Right ventricle myocardium superior (tissue), 1 donor: ENCODE measurements at regions of chr17 and their contacts with region 1.

Region 1: DNA sequence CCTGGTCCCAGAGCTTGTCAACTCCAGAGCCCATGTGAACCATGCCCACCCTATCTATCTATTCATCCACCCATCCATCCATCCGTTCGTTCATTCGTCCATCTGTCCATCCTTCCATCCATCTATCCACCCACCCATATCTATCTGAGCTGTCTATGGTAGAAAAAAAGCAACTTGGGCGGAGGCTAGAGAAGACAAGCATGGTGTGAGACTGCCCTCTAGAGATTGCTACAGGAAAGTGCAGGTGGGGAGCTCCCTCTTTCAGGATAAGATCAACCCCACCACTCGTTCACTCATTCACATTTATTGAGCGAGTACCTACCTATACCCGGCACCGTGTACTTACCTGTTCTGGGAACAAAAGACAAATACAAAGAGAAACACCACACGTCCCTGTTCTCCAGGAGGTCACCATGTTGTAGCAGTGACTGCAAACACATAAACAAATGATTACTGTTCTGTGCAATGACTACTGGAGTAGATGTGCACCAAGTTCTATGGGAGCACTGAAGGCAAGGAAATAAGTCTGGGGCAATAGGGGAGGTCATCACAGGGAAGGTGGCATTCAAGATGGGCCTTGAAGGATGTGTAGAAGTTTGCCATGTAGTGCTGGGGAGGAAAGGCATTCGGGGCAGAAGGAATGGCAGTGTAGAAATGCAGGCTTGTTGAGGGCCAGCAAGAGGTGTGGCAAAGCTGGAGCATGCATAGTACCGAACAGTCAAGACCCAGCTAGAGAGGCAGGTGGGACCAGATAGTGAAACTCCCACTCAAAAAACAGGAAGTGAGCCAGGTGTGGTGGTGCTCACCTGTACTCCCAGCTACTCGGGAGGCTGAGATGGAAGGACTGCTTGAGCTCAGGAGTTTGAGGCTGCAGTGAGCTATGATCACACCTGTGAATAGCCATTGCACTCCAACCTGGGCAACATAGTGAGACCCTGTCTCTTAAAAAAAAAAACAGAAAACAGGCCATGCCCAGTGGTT is 13.4 kb upstream of the ATP5MC1 start:
- DNase-seq: no peak
- ATAC-seq: peak; percentile 93

Region 2: GRCh38 chr17:48671697-48672171 is 207.5 kb before region 1 on chr17:
- intact Hi-C with region 1: loop called (anchors 5 kb)
- DNase-seq: peak; percentile 88
- ATAC-seq: peak; percentile 83

Region 3: DNA sequence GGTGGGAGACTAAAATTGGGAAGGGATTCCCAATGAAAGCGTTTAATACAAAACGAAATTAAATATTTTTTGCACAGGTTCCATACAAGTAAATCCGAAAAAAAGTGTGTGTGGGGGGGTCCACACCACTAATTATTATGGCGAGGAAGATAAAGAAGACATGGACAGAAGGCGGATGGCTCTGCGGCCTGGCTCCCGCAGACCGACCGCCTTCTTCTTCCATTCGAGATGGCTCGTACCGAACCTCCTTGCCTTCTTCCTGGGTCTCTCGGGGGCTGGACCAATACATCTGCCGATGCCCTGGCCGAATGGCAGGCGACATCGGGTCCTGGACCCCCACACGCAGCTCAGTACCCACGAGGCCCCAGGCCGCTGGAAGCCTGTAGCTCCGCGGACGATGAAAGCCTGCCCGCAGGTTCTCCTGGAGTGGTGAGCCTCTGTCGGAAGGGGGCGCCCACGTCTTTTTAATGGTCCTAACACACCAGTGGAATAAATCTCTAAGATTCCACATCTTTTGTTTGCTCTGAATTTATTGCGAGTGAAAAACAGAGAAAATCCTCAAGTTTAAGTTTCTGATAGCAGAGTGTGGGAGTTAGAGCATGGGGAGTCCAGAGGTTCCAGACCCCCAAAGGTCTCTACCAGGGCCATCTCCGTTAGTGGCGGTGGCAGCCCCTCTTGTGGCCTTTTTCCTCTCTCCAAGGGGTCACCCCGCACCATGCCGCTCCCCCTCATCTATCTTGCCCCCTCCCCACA is 154.8 kb before region 1 on chr17:
- intact Hi-C with region 1: loop called (anchors 5 kb)
- DNase-seq: peak; percentile 89
- ATAC-seq: peak; percentile 86

Region 4: DNA sequence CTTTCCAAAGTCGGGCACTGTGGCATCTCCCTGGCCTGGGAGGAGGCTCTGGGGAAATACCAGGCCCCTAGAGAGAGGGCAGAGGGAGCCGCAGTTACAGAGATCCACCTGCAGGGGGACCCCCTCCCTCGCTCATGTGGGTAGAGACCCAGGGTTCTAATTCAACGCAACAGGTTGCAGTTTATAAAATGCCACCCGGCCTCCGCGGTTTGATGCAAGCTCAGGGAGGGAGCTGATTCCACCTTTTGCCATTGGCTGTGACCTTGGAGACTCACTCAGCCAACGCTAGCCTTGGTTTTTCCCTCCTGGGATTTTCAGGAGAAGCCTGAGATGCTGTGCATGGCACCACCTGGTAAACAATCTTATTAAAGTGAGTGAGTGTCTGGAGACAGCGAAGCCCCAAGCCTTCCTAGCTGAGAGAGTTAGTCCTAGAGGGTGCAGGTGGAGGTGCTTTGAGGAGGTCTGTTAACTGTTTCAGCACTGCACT is 74.2 kb before region 1 on chr17:
- intact Hi-C with region 1: loop called (anchors 2 kb)
- DNase-seq: peak; percentile 61
- ATAC-seq: peak; percentile 88

Region 5: GRCh38 chr17:48814504-48814903 is 64.7 kb before region 1 on chr17:
- intact Hi-C with region 1: loop called (anchors 2 kb)
- DNase-seq: peak; percentile 61
- ATAC-seq: no peak